GM12878 (cell line): ENCODE measurements at regions of chr6 and their contacts with region 1.

Region 1: GRCh38 chr6:111057074-111057752 is 30.1 kb upstream of the SLC16A10 start:
- DNase-seq: no peak
- ATAC-seq: peak; percentile 96
- H3K4me3 ChIP-seq: no peak overlapping the region
- H3K27ac ChIP-seq: no peak overlapping the region
- H3K4me1 ChIP-seq: no peaks in the 10 kb centered on the region
- H3K27me3 ChIP-seq: no peaks in the 10 kb centered on the region
- CTCF ChIP-seq: peak; percentile 73 to 90 (median 86)
- EP300 ChIP-seq: no peak
- POLR2A ChIP-seq: no peak
- RAD21 ChIP-seq: peak; percentile 79

Region 2: GRCh38 chr6:110944681-110945151 is 112.5 kb before region 1 on chr6:
- CTCF ChIA-PET with region 1: no interaction called
- POLR2A ChIA-PET with region 1: no interaction called
- RAD21 ChIA-PET with region 1: no interaction called
- SMC1A ChIA-PET with region 1: no interaction called
- in situ Hi-C with region 1: no loop called
- intact Hi-C with region 1: no loop called
- DNase-seq: peak; percentile 94
- ATAC-seq: peak; percentile 99
- H3K4me3 ChIP-seq: peak overlapping the region; percentile 9; the same call in 1 of the 2 replicates
- H3K27ac ChIP-seq: peak overlapping the region; percentile 22; the same call in 1 of the 2 replicates
- H3K4me1 ChIP-seq: peaks cover 10% of the 10 kb centered on the region
- H3K27me3 ChIP-seq: no peaks in the 10 kb centered on the region
- CTCF ChIP-seq: no peak
- EP300 ChIP-seq: peak; percentile 99
- POLR2A ChIP-seq: no peak
- RAD21 ChIP-seq: no peak

Region 3: DNA sequence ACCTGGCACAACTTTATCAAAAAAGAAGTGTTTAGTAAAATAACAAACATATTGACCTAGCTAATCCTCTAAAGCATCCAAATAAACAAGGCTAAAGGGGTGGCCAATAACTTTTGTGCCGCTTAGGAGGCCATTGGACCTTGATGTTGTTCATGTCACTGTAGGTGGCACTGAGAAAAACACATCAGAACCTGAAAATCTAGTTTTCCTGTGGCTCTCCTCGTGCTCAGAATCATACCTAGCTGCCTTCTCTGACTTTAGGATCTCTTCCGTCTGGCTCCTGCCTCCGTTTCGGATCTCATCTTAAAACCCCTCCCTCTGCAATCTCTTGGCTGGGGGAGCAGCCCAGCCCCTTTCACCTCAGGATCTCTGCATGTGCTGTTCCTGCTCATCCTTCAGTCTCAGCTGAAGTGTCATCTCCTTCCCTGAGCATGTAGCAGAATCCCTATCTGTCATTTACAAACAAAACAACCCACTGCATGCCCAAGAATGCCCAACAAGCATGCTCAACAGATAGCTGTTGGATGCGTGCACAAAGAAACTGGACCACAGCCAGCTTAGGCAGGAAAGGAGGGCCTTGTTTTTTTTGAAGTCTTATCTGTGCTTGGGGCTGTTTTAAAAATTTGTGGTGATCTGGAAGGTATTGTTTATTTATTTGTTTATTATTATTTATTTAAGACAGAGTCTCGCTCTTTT is 11.4 kb after region 1 on chr6:
- CTCF ChIA-PET with region 1: interaction called, 14 read pairs
- POLR2A ChIA-PET with region 1: no interaction called
- RAD21 ChIA-PET with region 1: interaction called, 3 read pairs
- SMC1A ChIA-PET with region 1: interaction called, 8 read pairs
- in situ Hi-C with region 1: no loop called
- intact Hi-C with region 1: no loop called
- DNase-seq: no peak
- ATAC-seq: no peak
- H3K4me3 ChIP-seq: no peak overlapping the region
- H3K27ac ChIP-seq: no peak overlapping the region
- H3K4me1 ChIP-seq: no peaks in the 10 kb centered on the region
- H3K27me3 ChIP-seq: no peaks in the 10 kb centered on the region; a peak in 1 of 4 replicates
- CTCF ChIP-seq: no peak
- EP300 ChIP-seq: no peak
- POLR2A ChIP-seq: no peak
- RAD21 ChIP-seq: no peak